Common myeloid progenitor, CD34-positive (primary cell): ENCODE measurements at regions of chr14 and their contacts with region 1.

Region 1: GRCh38 chr14:22070119-22071011 is 396.7 kb upstream of the OR4E1 start:
- DNase-seq: peak; percentile 72 to 91 (median 89)
- H3K4me3 ChIP-seq: peak overlapping the region; percentile 3 to 76 (median 64)
- H3K27ac ChIP-seq: peak overlapping the region in 1 of 2 experiments; percentile 59
- H3K4me1 ChIP-seq: peaks cover 20 to 65% (median 37%) of the 10 kb centered on the region in 4 experiments
- H3K27me3 ChIP-seq: no peaks in the 10 kb centered on the region

Region 2: GRCh38 chr14:21449899-21450216 is 620.5 kb before region 1 on chr14:
- CTCF ChIA-PET with region 1: no interaction called
- POLR2A ChIA-PET with region 1: no interaction called
- DNase-seq: no peak
- H3K4me3 ChIP-seq: no peak overlapping the region
- H3K27ac ChIP-seq: no peak overlapping the region
- H3K4me1 ChIP-seq: peaks cover 3 to 11% (median 8%) of the 10 kb centered on the region in 4 experiments
- H3K27me3 ChIP-seq: no peaks in the 10 kb centered on the region

Region 3: DNA sequence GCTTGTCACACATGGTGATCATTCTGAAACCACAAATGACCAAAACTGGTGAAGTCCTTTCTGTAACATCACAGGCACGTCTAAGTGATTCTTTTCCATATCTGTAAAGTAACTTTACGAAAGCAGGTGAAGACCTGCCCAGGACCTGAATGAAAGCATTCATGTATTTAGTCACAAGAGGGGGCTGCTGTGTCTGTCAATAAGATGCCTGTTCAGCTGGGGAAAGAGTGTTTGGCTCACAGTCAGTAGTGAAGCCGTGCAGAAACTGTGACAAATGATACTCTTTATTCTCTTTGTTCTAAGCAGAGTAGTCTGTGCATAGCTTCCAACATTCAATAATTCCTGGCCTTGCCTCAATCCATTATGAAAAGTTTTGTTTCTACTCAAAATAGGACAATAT is 23.2 kb before region 1 on chr14:
- CTCF ChIA-PET with region 1: interaction called, 30 read pairs
- POLR2A ChIA-PET with region 1: interaction called, 3 read pairs
- DNase-seq: peak; percentile 64 to 81 (median 78)
- H3K4me3 ChIP-seq: peak overlapping the region in 1 of 7 experiments; percentile 29
- H3K27ac ChIP-seq: no peak overlapping the region
- H3K4me1 ChIP-seq: peaks cover 4 to 33% (median 14%) of the 10 kb centered on the region in 4 experiments
- H3K27me3 ChIP-seq: no peaks in the 10 kb centered on the region

Region 4: DNA sequence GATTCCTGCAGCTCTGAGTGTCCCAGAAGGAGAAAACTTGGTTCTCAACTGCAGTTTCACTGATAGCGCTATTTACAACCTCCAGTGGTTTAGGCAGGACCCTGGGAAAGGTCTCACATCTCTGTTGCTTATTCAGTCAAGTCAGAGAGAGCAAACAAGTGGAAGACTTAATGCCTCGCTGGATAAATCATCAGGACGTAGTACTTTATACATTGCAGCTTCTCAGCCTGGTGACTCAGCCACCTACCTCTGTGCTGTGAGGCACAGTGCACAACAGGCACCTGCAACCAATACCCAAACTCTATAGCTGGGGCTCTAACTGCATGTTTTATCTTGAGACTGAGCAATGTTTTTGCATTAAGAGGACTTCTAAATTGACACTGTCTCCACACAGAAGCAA is 17.6 kb before region 1 on chr14:
- CTCF ChIA-PET with region 1: interaction called, 30 read pairs
- POLR2A ChIA-PET with region 1: no interaction called
- DNase-seq: peak in 1 of 3 donors; percentile 28
- H3K4me3 ChIP-seq: peak overlapping the region in 1 of 7 experiments; percentile 17
- H3K27ac ChIP-seq: no peak overlapping the region
- H3K4me1 ChIP-seq: peaks cover 2 to 33% (median 22%) of the 10 kb centered on the region in 4 experiments
- H3K27me3 ChIP-seq: no peaks in the 10 kb centered on the region

Region 5: DNA sequence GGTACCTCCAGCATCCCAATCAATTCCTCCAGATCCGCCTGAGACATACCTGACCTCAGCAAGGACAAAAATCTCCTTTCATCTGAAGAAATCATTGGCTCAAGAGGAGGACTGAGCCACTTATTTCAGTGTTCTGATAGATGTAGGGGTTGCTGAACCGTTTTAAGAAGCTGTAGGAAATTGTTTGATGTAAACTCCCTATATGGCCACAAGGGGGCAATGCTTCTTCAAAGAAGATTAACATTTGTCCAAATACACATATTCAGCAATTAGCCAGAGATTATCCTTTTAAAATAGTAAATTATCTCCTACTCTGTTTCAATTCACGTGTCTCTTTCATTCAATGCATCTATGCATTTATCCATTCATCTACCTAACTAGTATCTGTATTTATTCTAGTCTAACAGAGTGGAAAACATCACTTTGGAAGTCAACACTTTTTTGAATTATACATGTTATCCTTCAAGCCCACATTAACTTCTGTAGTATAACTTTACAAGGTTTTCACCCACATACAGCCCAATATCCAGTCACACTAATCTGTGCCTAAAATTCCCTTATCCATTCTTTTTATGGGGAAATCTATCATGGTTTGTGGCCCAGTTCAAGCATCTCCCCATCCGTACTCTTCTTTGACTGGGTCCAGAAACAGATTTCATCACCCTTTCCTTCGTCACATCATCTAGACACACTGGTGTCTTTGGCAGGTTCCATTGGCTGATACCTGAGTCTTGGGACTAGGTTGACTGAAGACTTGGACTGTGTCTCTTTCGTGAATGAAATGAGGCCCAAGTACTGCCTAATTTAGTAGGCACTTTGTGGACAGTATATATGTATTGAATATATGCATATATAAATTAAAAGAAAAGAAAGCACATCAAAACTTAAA is 14.3 kb after region 1 on chr14:
- CTCF ChIA-PET with region 1: interaction called, 17 read pairs
- POLR2A ChIA-PET with region 1: no interaction called
- DNase-seq: peak; percentile 71 to 86 (median 78)
- H3K4me3 ChIP-seq: no peak overlapping the region
- H3K27ac ChIP-seq: no peak overlapping the region
- H3K4me1 ChIP-seq: peaks cover 0 to 10% (median 5%) of the 10 kb centered on the region in 4 experiments
- H3K27me3 ChIP-seq: no peaks in the 10 kb centered on the region